ENCODE measurements at regions of chr19 and their contacts with region 1.

Region 1: GRCh38 chr19:4723367-4724187 is at the start of gene DPP9:
- DNase-seq: peak; percentile 95
- ATAC-seq: peak; percentile 93
- H3K4me3 Mint-ChIP-seq: peak within 1 kb of the TSS; percentile 100
- H3K27ac Mint-ChIP-seq: peak within 1 kb of the TSS; percentile 100
- H3K4me1 Mint-ChIP-seq: peaks cover 30% of the 10 kb centered on the region
- H3K27me3 Mint-ChIP-seq: peaks cover 2% of the 10 kb centered on the region
- total RNA-seq, gene DPP9: 91.7 TPM

Region 2: DNA sequence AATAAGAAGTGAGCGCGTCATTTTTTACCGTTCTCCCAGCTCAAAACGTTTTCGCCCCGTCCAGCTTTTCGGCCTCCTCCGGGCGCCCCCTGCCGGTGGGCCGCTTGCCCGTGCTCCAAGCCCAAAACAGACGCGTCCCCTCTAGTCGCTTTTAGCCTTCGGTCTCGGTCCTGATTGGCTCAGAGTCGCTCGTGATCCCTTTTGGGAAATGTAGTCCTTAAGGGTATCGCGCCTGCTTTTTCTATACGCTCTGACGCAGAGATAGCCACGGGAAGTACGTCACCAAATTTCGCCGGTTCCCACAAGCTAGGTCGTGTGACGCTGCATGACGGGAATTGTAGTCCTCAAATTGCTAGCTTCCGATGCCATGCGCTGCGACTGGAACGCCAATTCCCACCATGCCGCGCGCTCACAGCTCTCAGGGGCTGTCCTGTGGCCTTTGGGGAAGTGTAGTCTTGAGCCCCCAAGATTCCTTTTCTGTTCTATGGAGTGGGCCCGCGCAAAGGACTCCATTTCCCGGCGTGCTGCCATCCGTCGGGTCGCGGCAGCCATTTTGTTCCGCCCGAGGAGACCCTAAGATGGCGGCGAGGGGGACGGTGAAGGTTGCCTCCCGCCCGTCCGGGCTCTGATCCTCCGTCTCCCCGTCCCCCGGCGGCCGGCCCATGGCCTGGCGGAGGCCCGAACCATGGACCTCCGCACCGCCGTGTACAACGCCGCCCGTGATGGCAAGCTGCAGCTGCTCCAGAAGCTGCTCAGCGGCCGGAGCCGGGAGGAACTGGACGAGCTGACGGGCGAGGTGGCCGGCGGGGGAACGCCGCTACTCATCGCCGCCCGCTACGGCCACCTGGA is 67.8 kb after region 1 on chr19 and contains the start of gene FEM1A:
- POLR2A ChIA-PET with region 1: interaction called, 28 read pairs
- DNase-seq: peak; percentile 98
- ATAC-seq: peak; percentile 97
- H3K4me3 Mint-ChIP-seq: peak within 1 kb of the TSS; percentile 89
- H3K27ac Mint-ChIP-seq: peak within 1 kb of the TSS; percentile 85
- H3K4me1 Mint-ChIP-seq: peaks cover 18% of the 10 kb centered on the region
- H3K27me3 Mint-ChIP-seq: no peaks in the 10 kb centered on the region
- total RNA-seq, gene FEM1A: 12.5 to 12.6 TPM

Region 3: DNA sequence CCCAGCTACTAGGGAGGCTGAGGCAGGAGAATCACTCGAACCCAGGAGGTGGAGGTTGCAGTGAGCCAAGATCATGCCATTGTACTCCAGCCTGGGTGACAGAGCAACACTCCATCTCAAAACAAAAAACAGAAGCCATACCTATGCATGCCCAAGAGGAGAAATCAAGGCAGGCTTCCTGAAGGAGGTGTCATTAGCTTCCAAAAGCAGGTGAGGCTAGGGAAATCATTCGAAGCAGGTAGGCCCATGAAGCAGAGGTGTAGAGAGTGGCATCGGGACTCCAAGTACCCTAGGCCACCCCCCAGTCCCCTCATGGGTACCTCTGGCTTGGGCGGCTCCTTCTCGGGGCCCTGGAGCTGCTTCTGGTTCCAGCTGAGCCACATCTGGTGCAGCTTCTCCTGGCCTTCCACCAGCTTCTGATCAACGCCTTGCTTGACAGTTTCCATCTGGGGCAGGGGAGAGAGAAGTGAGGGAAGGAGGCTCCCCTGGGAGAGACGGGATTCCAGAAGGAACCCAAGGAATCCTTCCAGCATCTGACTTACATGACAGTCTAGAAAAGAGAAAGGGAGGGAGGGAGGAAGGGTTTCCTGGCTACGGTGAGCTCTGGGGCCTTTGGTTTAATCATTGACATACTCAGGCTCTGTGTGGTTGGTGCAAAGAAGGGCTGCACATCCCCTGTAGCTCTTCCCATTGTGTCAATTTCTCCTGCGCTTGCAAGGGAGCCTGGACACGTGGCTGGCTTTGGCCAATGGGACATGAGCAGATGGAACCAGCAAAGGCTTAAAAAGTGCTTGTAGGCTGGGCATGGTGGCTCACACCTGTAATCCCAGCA is 121.0 kb after region 1 on chr19:
- POLR2A ChIA-PET with region 1: no interaction called
- DNase-seq: no peak
- ATAC-seq: no peak
- H3K4me3 Mint-ChIP-seq: no peak overlapping the region
- H3K27ac Mint-ChIP-seq: no peak overlapping the region
- H3K4me1 Mint-ChIP-seq: no peaks in the 10 kb centered on the region
- H3K27me3 Mint-ChIP-seq: no peaks in the 10 kb centered on the region

Measured in activated naive CD8-positive, alpha-beta T cell treated with anti-CD3 and anti-CD28 coated beads, Interleukin-2, amount 10 ng/mL, durations not matched to agents 7 days and 5 days (primary cell).